ENCODE measurements at regions of chr4 and their contacts with region 1.

Region 1: DNA sequence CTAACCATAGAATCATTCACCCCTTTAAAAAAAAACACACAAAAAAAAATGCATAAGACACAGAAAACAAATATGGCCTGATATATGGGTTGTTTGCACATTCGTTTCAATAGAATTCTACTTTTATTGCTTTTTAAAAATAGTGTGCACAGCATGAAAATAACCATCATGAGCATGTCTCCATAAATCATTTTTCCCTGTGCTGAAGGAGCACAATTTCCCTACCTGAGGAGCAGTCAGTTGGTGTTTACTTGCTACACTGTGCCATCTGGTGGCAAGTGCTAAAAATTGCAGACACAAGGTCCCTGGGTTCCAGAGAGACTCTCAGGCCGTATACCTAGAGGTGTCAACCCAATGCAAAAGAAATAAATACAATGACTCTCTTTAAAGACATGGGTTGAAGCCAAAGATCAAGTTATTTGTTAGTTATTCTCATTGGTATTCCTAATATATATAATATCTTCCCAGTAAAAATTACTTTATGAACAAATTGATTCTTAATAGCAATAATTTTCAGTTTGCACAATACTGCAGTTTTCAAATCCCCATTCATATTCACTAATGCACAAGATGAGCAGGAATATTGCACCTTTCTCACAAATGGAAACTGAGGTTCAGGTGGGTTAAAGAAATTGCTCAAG is 551.4 kb downstream of the IQCM start:
- DNase-seq: peak; percentile 80
- H3K4me3 Mint-ChIP-seq: no peak overlapping the region
- H3K27ac Mint-ChIP-seq: no peak overlapping the region
- H3K4me1 Mint-ChIP-seq: no peaks in the 10 kb centered on the region
- H3K27me3 Mint-ChIP-seq: no peaks in the 10 kb centered on the region
- CTCF ChIP-seq: peak; percentile 78

Region 2: DNA sequence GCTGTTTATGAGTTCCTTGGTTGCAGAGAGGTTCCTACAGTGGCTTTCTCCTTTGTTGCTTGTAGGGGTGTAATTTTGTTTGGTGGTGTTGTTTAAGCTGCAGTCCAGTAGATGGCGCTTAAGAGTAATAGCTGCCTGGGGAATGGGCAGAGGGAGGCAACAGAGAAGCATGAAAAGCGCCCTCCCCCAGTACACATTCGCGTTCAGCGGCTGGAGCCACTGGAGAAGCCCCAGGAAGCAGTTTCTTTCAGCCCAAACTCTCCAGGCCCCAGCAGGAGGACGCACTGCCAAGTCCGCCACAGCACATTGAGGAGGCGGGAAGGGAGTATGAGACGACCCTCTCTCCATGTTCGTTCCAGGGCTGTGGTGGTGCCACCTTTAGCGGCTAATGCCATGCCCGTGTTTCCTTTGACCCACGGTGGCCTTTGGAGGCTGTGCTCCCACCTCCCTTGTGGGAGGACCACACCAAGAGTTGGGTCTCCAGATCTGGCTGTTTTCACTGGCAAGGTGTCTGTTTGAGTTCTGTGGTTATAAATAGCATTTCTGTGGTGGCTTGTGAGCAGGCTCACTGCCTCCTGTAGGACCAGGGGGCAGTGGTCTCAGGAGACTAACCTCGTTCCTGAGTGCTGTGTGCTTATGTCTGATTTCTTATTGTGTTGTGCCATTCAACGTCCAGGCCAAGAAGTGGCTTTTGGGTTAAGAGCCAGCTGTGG is 1280.0 kb before region 1 on chr4:
- CTCF ChIA-PET with region 1: interaction called, 3 read pairs
- POLR2A ChIA-PET with region 1: no interaction called
- intact Hi-C with region 1: loop called (anchors 10 kb)
- DNase-seq: peak; percentile 59
- H3K4me3 Mint-ChIP-seq: no peak overlapping the region
- H3K27ac Mint-ChIP-seq: no peak overlapping the region
- H3K4me1 Mint-ChIP-seq: peaks cover 6% of the 10 kb centered on the region
- H3K27me3 Mint-ChIP-seq: no peaks in the 10 kb centered on the region
- CTCF ChIP-seq: peak; percentile 79

Region 3: DNA sequence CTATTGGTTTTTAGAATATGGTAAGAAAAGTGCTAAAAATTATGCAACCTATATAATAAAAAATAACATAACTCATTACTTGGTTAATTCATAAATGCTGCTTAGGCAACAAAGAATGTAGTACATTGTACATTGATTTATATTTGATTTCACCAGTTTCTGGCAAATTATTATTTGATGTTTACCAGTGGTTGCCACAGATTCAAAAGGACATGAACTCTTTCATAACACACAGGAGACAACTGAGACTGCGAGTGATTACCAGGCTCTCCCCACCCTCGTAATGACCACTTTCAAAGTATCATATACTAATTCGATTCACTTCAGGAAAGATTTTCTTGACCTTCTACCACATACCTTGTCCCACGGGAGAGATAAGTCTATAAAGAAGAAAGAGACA is 980.5 kb before region 1 on chr4:
- CTCF ChIA-PET with region 1: interaction called, 4 read pairs
- POLR2A ChIA-PET with region 1: no interaction called
- intact Hi-C with region 1: loop called (anchors 1 kb)
- DNase-seq: no peak
- H3K4me3 Mint-ChIP-seq: no peak overlapping the region
- H3K27ac Mint-ChIP-seq: no peak overlapping the region
- H3K4me1 Mint-ChIP-seq: no peaks in the 10 kb centered on the region
- H3K27me3 Mint-ChIP-seq: no peaks in the 10 kb centered on the region
- CTCF ChIP-seq: no peak

Region 4: GRCh38 chr4:148441986-148442831 is 822.0 kb before region 1 on chr4 and contains the start of gene NR3C2:
- CTCF ChIA-PET with region 1: interaction called, 6 read pairs
- POLR2A ChIA-PET with region 1: no interaction called
- intact Hi-C with region 1: loop called (anchors 5 kb)
- DNase-seq: peak; percentile 99
- H3K4me3 Mint-ChIP-seq: peak within 1 kb of the TSS; percentile 98
- H3K27ac Mint-ChIP-seq: no peak within 1 kb of the TSS
- H3K4me1 Mint-ChIP-seq: peaks cover 15% of the 10 kb centered on the region
- H3K27me3 Mint-ChIP-seq: peaks cover 18% of the 10 kb centered on the region
- CTCF ChIP-seq: no peak
- total RNA-seq, gene NR3C2: 0.21 and 0.34 TPM in 2 replicates

Region 5: DNA sequence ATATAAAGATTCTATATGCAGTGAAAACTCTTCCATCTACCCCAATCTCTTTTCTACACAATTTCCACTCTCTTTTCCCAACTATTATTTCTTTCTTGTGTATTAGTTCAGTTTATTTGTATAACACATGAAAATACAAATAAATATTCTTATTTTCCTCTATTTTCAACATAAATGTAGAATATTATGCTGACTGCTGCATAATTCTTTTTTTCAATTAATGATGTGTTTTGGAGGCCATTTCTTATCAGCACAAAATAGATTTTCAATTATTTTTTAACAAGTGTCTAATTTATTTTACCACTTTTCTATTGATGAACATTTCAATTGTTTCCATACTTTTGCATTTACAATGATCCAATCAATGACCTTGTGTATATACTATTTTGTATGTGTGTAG is 264.3 kb before region 1 on chr4:
- CTCF ChIA-PET with region 1: no interaction called
- POLR2A ChIA-PET with region 1: no interaction called
- intact Hi-C with region 1: loop called (anchors 5 kb)
- DNase-seq: no peak
- H3K4me3 Mint-ChIP-seq: no peak overlapping the region
- H3K27ac Mint-ChIP-seq: no peak overlapping the region
- H3K4me1 Mint-ChIP-seq: no peaks in the 10 kb centered on the region
- H3K27me3 Mint-ChIP-seq: no peaks in the 10 kb centered on the region
- CTCF ChIP-seq: no peak

Region 6: DNA sequence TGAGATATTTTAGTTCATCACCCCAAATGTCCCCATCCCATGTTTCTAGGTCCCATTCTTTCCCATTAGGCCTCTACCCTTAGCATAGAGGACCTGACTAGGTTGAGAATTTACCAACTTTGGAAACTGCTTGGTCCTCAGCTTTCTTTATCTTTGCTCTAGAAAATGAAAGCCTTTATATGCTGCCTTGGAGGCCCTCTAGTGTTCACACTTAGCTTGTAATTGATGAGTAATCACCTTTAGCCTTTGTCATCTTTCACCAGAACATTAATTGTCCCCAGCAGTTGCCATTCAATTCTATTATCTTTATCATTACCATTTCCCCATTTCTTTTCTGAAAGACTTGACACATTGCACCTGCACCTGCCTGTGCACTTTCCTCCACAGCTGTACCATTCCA is 232.8 kb before region 1 on chr4:
- CTCF ChIA-PET with region 1: interaction called, 6 read pairs
- POLR2A ChIA-PET with region 1: no interaction called
- intact Hi-C with region 1: loop called (anchors 10 kb)
- DNase-seq: peak; percentile 54
- H3K4me3 Mint-ChIP-seq: no peak overlapping the region
- H3K27ac Mint-ChIP-seq: no peak overlapping the region
- H3K4me1 Mint-ChIP-seq: no peaks in the 10 kb centered on the region
- H3K27me3 Mint-ChIP-seq: no peaks in the 10 kb centered on the region
- CTCF ChIP-seq: peak; percentile 29

Region 7: DNA sequence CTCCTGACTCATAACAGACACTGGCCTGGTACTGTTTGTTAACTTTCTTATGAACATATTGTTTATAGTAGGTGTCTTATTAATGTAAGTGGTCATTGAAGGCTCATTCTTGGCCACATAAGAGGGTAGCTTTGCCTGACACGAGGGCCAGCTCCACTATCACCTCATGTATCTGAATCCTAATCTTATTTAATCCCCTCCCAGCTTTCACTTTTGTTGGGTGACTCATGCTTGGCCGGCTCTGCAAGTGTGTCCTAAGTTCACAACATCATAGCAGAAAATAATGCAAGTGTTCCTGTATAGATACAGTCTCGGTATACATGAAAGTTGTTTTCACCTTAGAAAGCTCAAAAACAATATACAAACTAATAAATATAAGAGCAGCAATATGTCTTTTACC is 267.6 kb after region 1 on chr4:
- CTCF ChIA-PET with region 1: no interaction called
- POLR2A ChIA-PET with region 1: no interaction called
- intact Hi-C with region 1: no loop called
- DNase-seq: peak; percentile 60
- H3K4me3 Mint-ChIP-seq: no peak overlapping the region
- H3K27ac Mint-ChIP-seq: peak overlapping the region; percentile 37
- H3K4me1 Mint-ChIP-seq: no peaks in the 10 kb centered on the region
- H3K27me3 Mint-ChIP-seq: no peaks in the 10 kb centered on the region
- CTCF ChIP-seq: no peak